ENCODE measurements at regions of chr11 and their contacts with region 1.

Region 1: GRCh38 chr11:113289431-113290187 is 24.8 kb upstream of the TTC12 start:
- DNase-seq: peak; percentile 85 to 87
- H3K4me3 ChIP-seq: no peak overlapping the region
- H3K27ac ChIP-seq: no peak overlapping the region
- H3K4me1 ChIP-seq: no peaks in the 10 kb centered on the region
- H3K27me3 ChIP-seq: no peaks in the 10 kb centered on the region
- CTCF ChIP-seq: peak; percentile 71 to 77 (median 74)
- POLR2A ChIP-seq: no peak

Region 2: DNA sequence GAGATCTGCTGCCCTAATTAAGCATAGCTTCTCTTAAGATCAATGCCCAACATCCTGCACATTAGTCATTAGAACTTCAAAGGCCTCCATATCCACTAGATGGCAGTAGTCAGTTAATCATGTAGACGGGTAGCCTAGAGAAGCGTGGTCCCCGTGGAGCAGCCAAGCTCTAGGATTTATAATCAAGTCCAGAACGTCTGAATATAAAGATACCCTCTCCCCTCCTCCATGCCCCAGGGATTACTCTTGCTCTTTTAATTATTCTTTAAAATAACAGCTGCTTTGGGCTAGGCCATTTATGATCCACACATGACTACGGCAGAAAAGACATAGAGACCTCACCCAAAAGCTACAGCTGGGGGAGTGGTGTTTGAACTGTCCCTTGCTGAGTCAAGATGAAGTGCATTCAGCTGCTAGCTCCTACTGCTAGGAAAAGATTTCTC is 701.3 kb before region 1 on chr11:
- intact Hi-C with region 1: loop called (anchors 5 kb)
- DNase-seq: peak in 1 of 2 donors; percentile 88
- H3K4me3 ChIP-seq: no peak overlapping the region
- H3K27ac ChIP-seq: no peak overlapping the region
- H3K4me1 ChIP-seq: peaks cover 22% of the 10 kb centered on the region
- H3K27me3 ChIP-seq: no peaks in the 10 kb centered on the region
- CTCF ChIP-seq: peak; percentile 34 to 72 (median 71)
- POLR2A ChIP-seq: no peak

Region 3: GRCh38 chr11:112748713-112749543 is 540.7 kb before region 1 on chr11:
- intact Hi-C with region 1: no loop called
- DNase-seq: no peak
- H3K4me3 ChIP-seq: no peak overlapping the region
- H3K27ac ChIP-seq: no peak overlapping the region
- H3K4me1 ChIP-seq: no peaks in the 10 kb centered on the region
- H3K27me3 ChIP-seq: no peaks in the 10 kb centered on the region
- CTCF ChIP-seq: no peak
- POLR2A ChIP-seq: no peak

Region 4: GRCh38 chr11:115078461-115079438 is 1789.1 kb after region 1 on chr11:
- intact Hi-C with region 1: loop called (anchors 5 kb)
- DNase-seq: no peak
- H3K4me3 ChIP-seq: no peak overlapping the region
- H3K27ac ChIP-seq: no peak overlapping the region
- H3K4me1 ChIP-seq: no peaks in the 10 kb centered on the region
- H3K27me3 ChIP-seq: no peaks in the 10 kb centered on the region
- CTCF ChIP-seq: no peak
- POLR2A ChIP-seq: no peak